ENCODE measurements at regions of chr6 and their contacts with region 1.

Region 1: GRCh38 chr6:109678240-109678639 is 12.8 kb downstream of the AK9 start:
- DNase-seq: no peak
- H3K4me3 ChIP-seq: no peak overlapping the region
- H3K27ac ChIP-seq: no peak overlapping the region
- H3K4me1 ChIP-seq: no peaks in the 10 kb centered on the region; a peak in 1 of 7 replicates
- H3K27me3 ChIP-seq: no peaks in the 10 kb centered on the region
- CTCF ChIP-seq: no peak
- EP300 ChIP-seq: no peak
- POLR2A ChIP-seq: no peak
- RAD21 ChIP-seq: no peak

Region 2: DNA sequence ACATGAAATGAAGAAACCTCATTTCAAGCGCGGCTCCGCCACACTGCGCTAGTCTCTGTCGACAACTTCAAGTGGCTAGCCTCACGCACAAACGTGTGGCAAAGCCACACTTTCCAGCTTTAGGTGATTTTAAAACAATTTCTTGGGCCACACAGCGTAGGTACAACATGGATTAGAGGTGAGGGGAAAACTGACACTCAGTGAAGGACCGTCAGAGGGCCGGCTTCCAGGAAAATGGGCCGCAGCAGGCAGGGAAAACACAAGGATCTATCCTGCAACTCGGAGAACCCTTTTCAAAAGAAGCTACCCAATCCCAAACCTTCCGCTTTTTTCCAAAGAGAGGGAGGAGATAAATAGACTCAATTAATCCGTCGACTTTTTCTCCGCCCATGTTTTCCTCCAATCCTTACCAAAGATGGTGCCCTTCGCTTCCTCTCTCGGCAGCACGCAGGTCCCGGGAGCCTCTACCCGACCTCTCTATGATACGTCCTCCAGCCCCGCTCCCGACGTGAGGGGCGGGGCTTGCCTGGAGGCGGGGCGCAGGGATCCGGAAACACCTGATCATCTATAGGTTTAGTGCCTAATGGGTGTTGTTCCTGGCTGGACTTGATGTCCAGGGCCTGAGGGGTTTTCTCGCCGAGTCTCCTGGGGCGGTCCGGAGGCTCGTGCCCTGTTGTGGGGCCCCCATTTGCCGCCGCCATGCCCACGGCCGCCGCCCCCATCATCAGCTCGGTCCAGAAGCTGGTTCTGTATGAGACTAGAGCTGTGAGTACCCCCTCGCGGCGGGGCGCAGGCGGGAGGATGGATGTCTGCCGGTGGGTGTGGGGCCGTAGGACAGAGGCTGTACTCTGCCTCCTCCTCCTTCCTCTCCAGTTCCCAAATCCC is 12.7 kb after region 1 on chr6 and contains the starts of genes AK9 and FIG4:
- CTCF ChIA-PET with region 1: interaction called, 3 read pairs
- POLR2A ChIA-PET with region 1: interaction called, 15 read pairs
- DNase-seq: peak; percentile 84 to 95
- H3K4me3 ChIP-seq: peak within 1 kb of the TSS; percentile 69 to 95 (median 84)
- H3K27ac ChIP-seq: peak within 1 kb of the TSS; percentile 42
- H3K4me1 ChIP-seq: peaks cover 0 to 2% (median 0%) of the 10 kb centered on the region in 4 experiments; a peak in 1 of 7 replicates
- H3K27me3 ChIP-seq: no peaks in the 10 kb centered on the region
- CTCF ChIP-seq: 0 out of 4 replicates have a peak, but pooled peaks of 1 of the 3 experiments have one; percentile 6
- EP300 ChIP-seq: no peak
- POLR2A ChIP-seq: peak; percentile 57 to 71
- RAD21 ChIP-seq: peak in 1 of 2 experiments; percentile 21; a peak in 2 of 4 replicates
- total RNA-seq, gene AK9: 1.8 and 2.7 TPM in 2 replicates
- total RNA-seq, gene FIG4: 21.3 and 21.9 TPM in 2 replicates